Right ventricle myocardium superior (tissue), 1 donor: ENCODE measurements at regions of chr10 and their contacts with region 1.

Region 1: GRCh38 chr10:28676968-28677887 is at the start of gene BAMBI:
- DNase-seq: peak; percentile 95
- ATAC-seq: peak; percentile 97
- total RNA-seq, gene BAMBI: 13.2 TPM

Region 2: DNA sequence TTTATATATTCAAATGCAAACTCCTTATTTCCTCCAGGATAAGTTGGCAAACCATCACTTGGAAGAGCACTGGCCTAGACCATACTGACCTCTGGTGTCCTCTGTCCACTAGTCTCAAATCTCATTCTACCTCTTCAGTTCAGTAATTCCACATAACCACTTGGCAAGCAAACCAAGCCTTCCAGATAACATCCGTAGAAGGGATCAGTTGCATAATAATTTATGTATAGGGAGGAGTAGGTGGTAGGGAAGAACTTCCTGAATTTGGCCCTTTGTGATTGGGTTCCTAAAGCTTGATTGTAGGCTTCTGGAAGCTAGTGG is 89.3 kb before region 1 on chr10:
- intact Hi-C with region 1: no loop called
- DNase-seq: no peak
- ATAC-seq: peak; percentile 89

Region 3: GRCh38 chr10:28807760-28808613 is 130.8 kb after region 1 on chr10:
- intact Hi-C with region 1: loop called (anchors 10 kb)
- DNase-seq: no peak
- ATAC-seq: peak; percentile 60

Region 4: DNA sequence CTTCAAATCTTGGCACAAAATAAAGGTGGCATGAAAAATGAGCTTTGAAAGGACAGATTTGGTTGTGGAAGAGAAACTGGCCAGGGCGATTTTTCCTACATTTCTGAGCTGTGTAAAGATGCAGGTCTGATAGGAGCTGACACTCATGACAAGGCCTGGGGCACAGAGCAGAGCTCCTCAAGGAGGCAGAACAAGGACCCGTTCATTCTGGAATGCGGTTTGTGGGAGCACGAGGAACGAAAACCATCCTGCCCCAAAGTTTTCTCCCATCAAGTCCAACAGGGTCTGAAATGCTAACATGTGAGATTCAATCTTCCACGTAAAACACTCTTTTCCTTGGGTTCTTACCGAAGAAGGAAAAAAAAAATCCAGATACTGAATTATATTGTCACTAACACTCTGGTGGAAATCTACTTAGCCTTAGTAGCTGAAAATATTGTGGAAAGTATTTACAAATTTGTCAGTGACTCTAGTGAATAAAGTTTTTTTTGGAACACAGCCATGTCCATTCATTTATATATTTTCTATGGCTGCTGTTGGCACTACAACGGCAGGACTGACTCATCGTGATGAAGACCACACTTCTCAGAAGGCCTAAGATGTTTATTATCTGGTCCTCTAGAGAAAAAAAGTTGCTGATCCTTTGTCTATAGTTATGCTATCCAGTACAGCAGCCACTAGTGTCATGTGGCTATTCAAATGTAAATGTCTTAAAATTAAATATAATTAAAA is 215.8 kb after region 1 on chr10:
- intact Hi-C with region 1: loop called (anchors 10 kb)
- DNase-seq: no peak
- ATAC-seq: no peak

Region 5: GRCh38 chr10:28984431-28984830 is 307.2 kb after region 1 on chr10:
- intact Hi-C with region 1: loop called (anchors 2 kb)
- DNase-seq: peak; percentile 92
- ATAC-seq: peak; percentile 97

Region 6: GRCh38 chr10:28991326-28992270 is 314.4 kb after region 1 on chr10:
- intact Hi-C with region 1: loop called (anchors 2 kb)
- DNase-seq: no peak
- ATAC-seq: peak; percentile 94